A673 (cell line): ENCODE measurements at regions of chr6 and their contacts with region 1.

Region 1: DNA sequence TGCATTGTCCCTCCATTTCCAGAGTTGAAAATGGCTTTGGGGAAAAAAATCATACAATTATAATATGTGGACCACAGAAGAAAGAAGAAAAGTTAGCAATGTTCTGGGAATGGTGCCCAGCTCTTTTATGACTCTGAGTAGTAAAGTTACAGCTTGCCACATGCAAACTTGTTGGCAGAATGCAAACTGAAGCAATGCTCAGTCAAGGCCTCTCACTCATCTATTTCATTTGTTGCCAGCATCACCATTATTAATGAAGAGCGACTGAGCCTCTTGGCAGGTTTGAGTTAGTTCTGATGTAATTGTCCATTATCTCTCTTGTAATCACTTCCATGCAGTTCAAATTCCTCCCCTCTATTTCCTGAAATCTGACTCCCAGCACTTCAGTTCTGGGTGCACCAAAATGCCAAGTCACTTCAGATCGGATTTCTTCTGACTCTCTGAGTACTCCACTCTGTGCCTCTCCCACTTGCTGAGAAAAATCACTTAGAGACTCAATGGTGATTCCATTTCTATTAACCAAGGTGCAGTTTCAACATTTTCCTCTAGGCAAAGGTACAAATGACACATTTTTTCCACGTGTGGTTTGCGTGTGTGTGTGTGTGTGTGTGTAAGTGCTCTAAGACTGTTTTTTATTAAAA is 154.4 kb upstream of the STMND1 start:
- DNase-seq: peak; percentile 98
- H3K4me3 ChIP-seq: peak overlapping the region; percentile 12
- H3K27ac ChIP-seq: peak overlapping the region; percentile 97
- H3K4me1 ChIP-seq: peaks cover 47% of the 10 kb centered on the region
- H3K27me3 ChIP-seq: no peaks in the 10 kb centered on the region
- CTCF ChIP-seq: no peak

Region 2: DNA sequence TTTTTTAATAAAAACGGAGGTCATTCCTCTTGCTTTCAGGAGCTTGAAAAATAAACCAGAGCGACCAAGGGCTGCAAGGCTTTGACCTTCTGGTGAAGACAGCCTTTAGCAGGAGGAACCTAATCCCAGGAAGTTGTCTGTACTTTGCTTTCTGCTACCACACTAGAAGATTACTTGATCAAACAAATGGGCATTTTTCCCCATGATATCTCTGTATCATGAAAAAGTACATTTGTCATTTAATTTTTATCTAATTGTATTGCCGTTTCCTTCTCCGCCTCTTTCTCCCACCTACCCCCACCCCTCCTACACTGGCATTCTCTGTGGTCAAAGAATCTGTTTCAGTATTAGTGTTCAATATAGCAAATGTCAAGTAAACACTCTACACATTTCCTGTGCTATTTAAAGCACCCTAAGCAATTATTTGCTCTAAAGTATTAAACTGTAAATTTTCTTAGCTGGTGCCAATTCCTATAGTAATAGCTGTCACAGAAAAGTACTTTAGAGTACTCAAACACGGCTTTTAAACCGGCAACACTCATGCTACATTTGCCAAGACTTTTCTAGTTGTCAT is 215.9 kb before region 1 on chr6:
- CTCF ChIA-PET with region 1: no interaction called
- POLR2A ChIA-PET with region 1: no interaction called
- intact Hi-C with region 1: no loop called
- DNase-seq: no peak
- H3K4me3 ChIP-seq: no peak overlapping the region
- H3K27ac ChIP-seq: no peak overlapping the region
- H3K4me1 ChIP-seq: peaks cover 62% of the 10 kb centered on the region
- H3K27me3 ChIP-seq: no peaks in the 10 kb centered on the region
- CTCF ChIP-seq: no peak

Region 3: GRCh38 chr6:16851758-16852157 is 95.7 kb before region 1 on chr6:
- CTCF ChIA-PET with region 1: no interaction called
- POLR2A ChIA-PET with region 1: no interaction called
- intact Hi-C with region 1: loop called (anchors 1 kb)
- DNase-seq: no peak
- H3K4me3 ChIP-seq: no peak overlapping the region
- H3K27ac ChIP-seq: peak overlapping the region; percentile 6
- H3K4me1 ChIP-seq: peaks cover 39% of the 10 kb centered on the region
- H3K27me3 ChIP-seq: no peaks in the 10 kb centered on the region
- CTCF ChIP-seq: no peak

Region 4: DNA sequence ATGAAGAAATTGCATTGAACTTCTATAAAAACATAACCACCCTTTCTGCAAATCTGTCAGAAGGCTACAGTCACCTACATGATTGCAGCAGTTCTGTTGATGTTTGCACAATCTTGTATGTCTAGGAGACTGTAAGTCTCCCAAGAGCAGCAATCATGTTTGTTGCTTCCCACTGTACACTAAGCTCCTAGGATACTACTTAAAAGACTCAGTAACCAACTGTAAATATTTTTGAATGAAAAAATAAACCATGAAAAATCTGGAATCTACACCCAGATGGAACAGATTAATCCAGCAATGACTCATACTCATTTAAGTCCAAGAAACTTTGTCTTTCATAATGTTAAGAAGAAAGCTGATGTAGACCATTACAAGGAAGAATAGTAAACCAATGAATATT is 17.7 kb before region 1 on chr6:
- CTCF ChIA-PET with region 1: no interaction called
- POLR2A ChIA-PET with region 1: no interaction called
- intact Hi-C with region 1: loop called (anchors 1 kb)
- DNase-seq: peak; percentile 92
- H3K4me3 ChIP-seq: no peak overlapping the region
- H3K27ac ChIP-seq: peak overlapping the region; percentile 69
- H3K4me1 ChIP-seq: peaks cover 20% of the 10 kb centered on the region
- H3K27me3 ChIP-seq: no peaks in the 10 kb centered on the region
- CTCF ChIP-seq: no peak